ENCODE measurements at regions of chr3 and their contacts with region 1.

Region 1: DNA sequence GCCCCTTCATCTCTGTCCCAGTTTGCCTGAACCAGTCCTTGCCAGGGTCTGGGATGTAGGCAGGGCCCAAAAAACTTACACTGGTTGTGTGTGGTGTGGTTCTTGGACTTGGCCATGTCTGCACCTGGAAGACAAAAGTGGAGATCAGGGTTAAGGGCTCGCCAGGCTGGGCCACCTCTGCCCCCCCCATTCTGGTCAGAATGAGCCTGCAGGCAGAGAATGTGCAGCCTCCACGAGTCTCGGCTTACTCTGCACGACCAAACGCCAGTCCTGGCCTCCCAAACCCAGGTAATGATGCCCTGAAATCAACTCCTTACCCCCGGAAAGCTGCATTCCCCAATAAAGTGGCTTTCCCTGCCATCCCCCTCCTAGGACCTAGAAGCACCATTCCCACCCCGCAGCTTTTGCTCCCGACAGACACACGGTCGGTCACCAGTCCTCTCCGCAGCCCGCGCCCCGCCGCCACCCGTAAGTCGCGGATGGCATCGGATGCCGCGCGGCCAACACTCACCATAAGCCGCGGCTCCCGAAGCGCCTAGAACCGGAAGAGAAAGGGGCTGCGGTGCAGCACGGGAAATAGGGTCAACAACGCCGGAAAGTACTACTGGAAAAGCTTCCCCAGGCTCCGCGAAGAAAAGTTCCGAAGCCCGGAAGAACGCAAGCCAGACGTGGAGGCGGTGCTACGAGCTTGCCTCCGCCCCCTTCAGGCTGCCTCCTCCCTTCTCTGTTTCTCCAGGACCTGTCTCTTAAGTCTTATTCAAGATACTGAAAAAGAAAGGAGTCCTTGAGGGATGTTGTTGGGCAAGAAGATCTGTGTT is at the start of gene RPL29:
- DNase-seq: peak; percentile 90
- H3K4me3 Mint-ChIP-seq: peak within 1 kb of the TSS; percentile 100
- H3K27ac Mint-ChIP-seq: peak within 1 kb of the TSS; percentile 100
- H3K4me1 Mint-ChIP-seq: peaks cover 25% of the 10 kb centered on the region
- H3K27me3 Mint-ChIP-seq: peaks cover 16% of the 10 kb centered on the region
- total RNA-seq, gene RPL29: 1,666 and 1,693 TPM in 2 replicates

Region 2: DNA sequence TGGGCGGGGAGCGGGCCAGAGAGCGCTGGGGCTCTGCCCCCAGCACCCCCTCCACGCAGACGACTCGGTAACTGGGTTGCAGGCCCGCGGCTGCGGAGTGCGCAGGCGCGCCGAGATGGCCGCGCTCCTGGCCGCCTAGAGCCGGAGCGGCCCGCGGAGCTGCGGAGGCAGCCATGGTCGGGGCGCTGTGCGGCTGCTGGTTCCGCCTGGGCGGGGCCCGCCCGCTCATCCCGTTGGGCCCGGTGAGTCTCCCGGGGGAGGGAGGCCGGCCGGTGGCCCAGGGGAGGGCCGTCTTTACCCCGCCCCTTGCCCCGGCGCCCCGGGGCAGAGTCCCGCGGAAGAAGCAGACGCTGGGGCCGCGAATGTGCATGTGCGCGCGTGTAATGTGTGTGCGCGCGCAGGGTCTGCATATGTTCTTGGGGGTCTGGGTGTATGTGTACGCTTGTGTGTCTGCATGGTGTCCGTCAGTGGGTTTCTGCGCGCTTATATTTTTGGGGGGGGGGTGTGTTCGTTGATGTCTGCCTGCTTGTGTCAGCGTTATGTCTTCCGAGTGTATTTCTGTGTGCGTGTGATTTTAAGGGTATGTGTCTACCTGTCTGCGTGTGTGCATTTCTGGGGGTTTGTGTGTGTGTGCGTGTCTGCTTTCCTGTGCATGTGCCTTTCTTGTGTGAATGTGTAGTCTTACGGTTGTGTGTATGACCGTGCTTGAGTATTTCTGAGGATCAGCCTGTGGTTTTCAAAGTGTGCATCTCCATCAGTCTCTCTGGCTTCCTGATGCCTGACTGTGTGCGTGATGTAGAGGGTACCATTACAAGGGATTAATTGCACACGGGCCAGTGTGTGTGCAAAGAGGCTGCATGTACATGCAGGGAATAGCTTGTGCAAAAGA is 20.3 kb before region 1 on chr3 and contains the start of gene ABHD14A:
- intact Hi-C with region 1: loop called (anchors 2 kb)
- DNase-seq: peak; percentile 70
- H3K4me3 Mint-ChIP-seq: peak within 1 kb of the TSS; percentile 90
- H3K27ac Mint-ChIP-seq: peak within 1 kb of the TSS; percentile 93
- H3K4me1 Mint-ChIP-seq: peaks cover 24% of the 10 kb centered on the region
- H3K27me3 Mint-ChIP-seq: no peaks in the 10 kb centered on the region
- total RNA-seq, gene ABHD14A: 13.5 and 15.9 TPM in 2 replicates

Region 3: GRCh38 chr3:51982782-51983577 is 12.6 kb before region 1 on chr3 and contains the start of gene ACY1:
- intact Hi-C with region 1: loop called (anchors 1 kb)
- DNase-seq: peak; percentile 73
- H3K4me3 Mint-ChIP-seq: peak within 1 kb of the TSS; percentile 94
- H3K27ac Mint-ChIP-seq: peak within 1 kb of the TSS; percentile 94
- H3K4me1 Mint-ChIP-seq: peaks cover 14% of the 10 kb centered on the region
- H3K27me3 Mint-ChIP-seq: no peaks in the 10 kb centered on the region
- total RNA-seq, gene ACY1: 62.8 and 64.6 TPM in 2 replicates

Region 4: GRCh38 chr3:52154117-52155094 is 158.9 kb after region 1 on chr3 and contains the start of gene POC1A:
- intact Hi-C with region 1: no loop called
- DNase-seq: peak; percentile 88
- H3K4me3 Mint-ChIP-seq: peak within 1 kb of the TSS; percentile 90
- H3K27ac Mint-ChIP-seq: peak within 1 kb of the TSS; percentile 92
- H3K4me1 Mint-ChIP-seq: peaks cover 16% of the 10 kb centered on the region
- H3K27me3 Mint-ChIP-seq: peaks cover under 1% of the 10 kb centered on the region
- total RNA-seq, gene POC1A: 20.4 and 22.2 TPM in 2 replicates

Measured in activated T-helper 2 cell treated with anti-CD3 and anti-CD28 coated beads, Interferon-gamma antibody, Interleukin-2, Interleukin-4, amounts not matched to agents 10 μg/mL and 5 μg/mL and 100 μg/mL, durations not matched to agents 14 hours and 24 hours and 36 hours (primary cell).